Activated CD4-positive, alpha-beta memory T cell treated with anti-CD3 and anti-CD28 coated beads for 36 hours (primary cell): ENCODE measurements at regions of chr9 and their contacts with region 1.

Region 1: GRCh38 chr9:6566409-6567139 is 79.0 kb downstream of the GLDC start:
- DNase-seq: peak; percentile 80
- H3K4me3 Mint-ChIP-seq: no peak overlapping the region
- H3K27ac Mint-ChIP-seq: peak overlapping the region; percentile 88
- H3K4me1 Mint-ChIP-seq: peaks cover 24% of the 10 kb centered on the region
- H3K27me3 Mint-ChIP-seq: peaks cover 3% of the 10 kb centered on the region

Region 2: DNA sequence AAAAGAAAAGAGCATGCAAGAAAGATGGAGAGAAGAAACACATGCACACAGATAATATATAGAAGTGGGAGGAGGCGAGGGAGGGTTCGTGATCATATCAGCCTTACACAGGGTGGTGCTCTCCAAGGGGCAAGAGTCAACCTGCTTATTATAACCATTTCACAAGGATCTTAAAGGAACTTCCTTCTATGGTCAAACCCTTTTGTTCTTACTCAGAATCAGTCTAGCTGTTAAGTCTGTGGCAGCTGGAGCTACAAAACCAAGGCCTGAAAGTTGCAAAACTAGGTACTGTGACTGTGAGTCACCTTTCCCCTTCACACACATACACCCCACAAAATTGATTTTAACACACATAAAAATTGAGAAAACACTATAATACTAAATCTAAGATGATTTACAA is 715.1 kb before region 1 on chr9:
- CTCF ChIA-PET with region 1: interaction called, 4 read pairs
- POLR2A ChIA-PET with region 1: no interaction called
- intact Hi-C with region 1: loop called (anchors 5 kb)
- DNase-seq: peak; percentile 66
- H3K4me3 Mint-ChIP-seq: no peak overlapping the region
- H3K27ac Mint-ChIP-seq: peak overlapping the region; percentile 70
- H3K4me1 Mint-ChIP-seq: peaks cover 46% of the 10 kb centered on the region
- H3K27me3 Mint-ChIP-seq: no peaks in the 10 kb centered on the region

Region 3: GRCh38 chr9:6353851-6354686 is 212.5 kb before region 1 on chr9:
- CTCF ChIA-PET with region 1: interaction called, 136 read pairs
- POLR2A ChIA-PET with region 1: no interaction called
- intact Hi-C with region 1: loop called (anchors 1 kb)
- DNase-seq: peak; percentile 23
- H3K4me3 Mint-ChIP-seq: no peak overlapping the region
- H3K27ac Mint-ChIP-seq: no peak overlapping the region
- H3K4me1 Mint-ChIP-seq: peaks cover 16% of the 10 kb centered on the region
- H3K27me3 Mint-ChIP-seq: peaks cover 4% of the 10 kb centered on the region

Region 4: DNA sequence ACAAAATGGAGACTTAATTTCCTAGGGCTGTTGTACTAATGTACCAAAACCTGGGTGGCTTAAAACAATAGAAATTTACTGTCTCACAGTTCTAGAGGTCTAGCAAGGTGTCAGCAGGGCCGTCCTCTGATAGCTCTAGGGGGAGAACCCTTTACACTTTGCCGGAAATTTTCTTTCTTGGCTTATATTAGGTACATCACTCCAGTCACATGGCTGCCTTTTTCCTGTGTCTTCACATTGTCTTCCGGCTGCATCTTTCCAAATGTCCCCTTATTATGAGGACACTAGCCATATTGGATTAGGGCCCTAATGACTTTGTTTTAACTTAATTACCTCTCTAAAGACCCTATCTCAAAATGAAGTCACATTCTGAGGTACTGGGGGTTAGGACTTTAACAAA is 147.8 kb before region 1 on chr9:
- CTCF ChIA-PET with region 1: interaction called, 7 read pairs
- POLR2A ChIA-PET with region 1: interaction called, 5 read pairs
- intact Hi-C with region 1: loop called (anchors 1 kb)
- DNase-seq: no peak
- H3K4me3 Mint-ChIP-seq: peak overlapping the region; percentile 62
- H3K27ac Mint-ChIP-seq: peak overlapping the region; percentile 83
- H3K4me1 Mint-ChIP-seq: peaks cover 59% of the 10 kb centered on the region
- H3K27me3 Mint-ChIP-seq: no peaks in the 10 kb centered on the region

Region 5: GRCh38 chr9:6428940-6429889 is 137.4 kb before region 1 on chr9:
- CTCF ChIA-PET with region 1: interaction called, 3 read pairs
- POLR2A ChIA-PET with region 1: no interaction called
- intact Hi-C with region 1: loop called (anchors 2 kb)
- DNase-seq: peak; percentile 25
- H3K4me3 Mint-ChIP-seq: peak overlapping the region; percentile 20
- H3K27ac Mint-ChIP-seq: peak overlapping the region; percentile 49
- H3K4me1 Mint-ChIP-seq: peaks cover 76% of the 10 kb centered on the region
- H3K27me3 Mint-ChIP-seq: no peaks in the 10 kb centered on the region

Region 6: GRCh38 chr9:6598249-6598725 is 31.7 kb after region 1 on chr9:
- CTCF ChIA-PET with region 1: interaction called, 4 read pairs
- POLR2A ChIA-PET with region 1: interaction called, 4 read pairs
- intact Hi-C with region 1: loop called (anchors 1 kb)
- DNase-seq: peak; percentile 74
- H3K4me3 Mint-ChIP-seq: peak overlapping the region; percentile 47
- H3K27ac Mint-ChIP-seq: peak overlapping the region; percentile 87
- H3K4me1 Mint-ChIP-seq: peaks cover 8% of the 10 kb centered on the region
- H3K27me3 Mint-ChIP-seq: peaks cover 1% of the 10 kb centered on the region